ENCODE measurements at regions of chr1 and their contacts with region 1.

Region 1: GRCh38 chr1:209827384-209828262 is at the start of gene UTP25:
- DNase-seq: peak; percentile 87 to 98 (median 92)
- ATAC-seq: peak; percentile 89
- H3K4me3 ChIP-seq: peak within 1 kb of the TSS; percentile 73 to 98
- H3K4me3 Mint-ChIP-seq: peak within 1 kb of the TSS; percentile 94
- H3K27ac ChIP-seq: peak within 1 kb of the TSS; percentile 73 to 89
- H3K27ac Mint-ChIP-seq: peak within 1 kb of the TSS; percentile 89
- H3K4me1 ChIP-seq: peaks cover 20% of the 10 kb centered on the region
- H3K4me1 Mint-ChIP-seq: peaks cover 42% of the 10 kb centered on the region
- H3K27me3 ChIP-seq: peaks cover 0 to 2% of the 10 kb centered on the region in 2 experiments
- H3K27me3 Mint-ChIP-seq: peaks cover 4% of the 10 kb centered on the region
- CTCF ChIP-seq: peak; percentile 78
- total RNA-seq, gene UTP25: 7.5 to 7.9 TPM

Region 2: DNA sequence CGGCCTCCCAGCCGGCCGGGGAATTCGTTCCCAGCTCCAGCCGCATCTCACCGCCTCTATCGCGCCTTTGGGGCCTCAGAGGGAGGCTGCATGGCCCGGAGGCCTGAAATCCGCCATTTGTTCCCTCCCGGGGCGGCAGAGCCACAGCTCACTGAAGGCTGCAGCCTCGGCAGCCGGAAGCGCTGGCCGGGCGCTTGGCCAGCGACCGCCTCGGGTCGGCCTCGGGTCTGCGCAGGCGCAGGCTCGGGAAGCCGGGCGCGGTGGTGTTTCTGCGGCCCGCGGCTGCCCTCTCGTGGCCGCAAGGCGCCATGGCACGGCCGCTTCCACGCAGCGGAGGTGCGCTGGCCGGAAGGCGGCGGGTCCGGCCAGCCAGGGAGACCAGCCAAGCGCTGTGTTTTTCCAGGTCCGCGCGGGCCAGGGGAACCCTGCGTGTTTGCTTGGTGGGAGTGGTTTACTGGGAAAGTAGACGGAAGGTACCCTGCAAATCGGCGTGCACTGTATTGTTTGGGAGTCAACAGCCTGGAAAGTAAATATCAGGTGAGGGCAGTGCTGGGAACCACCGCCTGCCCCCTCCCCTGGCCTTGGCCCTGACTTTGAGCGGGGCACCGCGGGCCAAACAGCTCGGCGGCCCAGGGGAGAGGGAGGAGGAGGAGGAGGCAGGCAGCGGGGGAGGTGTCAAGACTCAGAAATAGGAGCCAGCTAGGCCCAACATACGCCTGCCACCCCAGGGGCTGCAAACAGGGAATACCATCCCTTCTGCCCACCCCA is 1864.0 kb before region 1 on chr1:
- CTCF ChIA-PET with region 1: no interaction called
- POLR2A ChIA-PET with region 1: no interaction called
- intact Hi-C with region 1: loop called in 1 of 2 experiments (anchors 5 kb)
- DNase-seq: peak; percentile 67 to 93 (median 82)
- ATAC-seq: peak; percentile 91
- H3K4me3 ChIP-seq: peak overlapping the region; percentile 71 to 92
- H3K4me3 Mint-ChIP-seq: peak overlapping the region; percentile 85
- H3K27ac ChIP-seq: peak overlapping the region; percentile 28 to 73
- H3K27ac Mint-ChIP-seq: peak overlapping the region; percentile 55
- H3K4me1 ChIP-seq: peaks cover 8% of the 10 kb centered on the region
- H3K4me1 Mint-ChIP-seq: peaks cover 12% of the 10 kb centered on the region
- H3K27me3 ChIP-seq: peaks cover 4 to 12% of the 10 kb centered on the region in 2 experiments
- H3K27me3 Mint-ChIP-seq: peaks cover 17% of the 10 kb centered on the region
- CTCF ChIP-seq: peak; percentile 99

Region 3: DNA sequence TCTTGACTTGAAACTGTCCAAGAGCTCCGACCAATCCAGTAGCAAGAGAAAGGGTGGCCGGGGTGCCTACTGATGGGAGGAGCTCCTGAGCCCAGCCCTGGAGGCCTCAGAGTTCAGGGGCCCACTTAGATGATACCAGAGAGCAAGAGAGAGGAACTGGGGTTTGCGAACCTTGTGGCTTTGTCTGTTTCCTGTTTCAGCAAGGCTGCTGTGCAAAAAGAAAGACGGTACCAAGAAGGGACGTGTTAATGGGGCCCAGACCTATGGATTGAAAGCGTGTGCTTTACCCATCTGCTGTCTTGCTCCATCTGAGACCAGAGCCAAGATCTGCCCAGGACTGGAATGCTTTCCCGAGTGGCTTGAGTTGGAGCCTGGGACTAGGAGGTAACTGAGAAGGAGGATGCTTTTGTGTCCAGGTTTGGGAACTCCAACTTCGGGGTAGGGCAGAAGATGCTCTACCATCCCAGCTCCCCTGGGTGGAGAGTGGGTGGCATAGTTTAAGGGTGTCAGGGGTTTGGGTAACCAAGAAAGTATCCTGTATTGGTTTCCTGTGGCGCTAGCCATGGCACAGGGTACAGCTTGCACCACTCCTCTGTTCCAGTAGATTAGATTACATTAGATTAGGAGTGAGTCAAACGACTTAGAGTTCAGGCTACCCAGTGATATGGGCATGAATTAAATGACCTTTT is 71.6 kb before region 1 on chr1 and contains the start of gene TRAF3IP3:
- CTCF ChIA-PET with region 1: interaction called, 14 read pairs
- POLR2A ChIA-PET with region 1: interaction called, 3 read pairs
- intact Hi-C with region 1: loop called in 1 of 2 experiments (anchors 5 kb)
- DNase-seq: peak; percentile 49 to 91 (median 79)
- ATAC-seq: peak; percentile 89
- H3K4me3 ChIP-seq: peak within 1 kb of the TSS; percentile 83 to 90
- H3K4me3 Mint-ChIP-seq: peak within 1 kb of the TSS; percentile 91
- H3K27ac ChIP-seq: peak within 1 kb of the TSS; percentile 79
- H3K27ac Mint-ChIP-seq: peak within 1 kb of the TSS; percentile 96
- H3K4me1 ChIP-seq: peaks cover 72% of the 10 kb centered on the region
- H3K4me1 Mint-ChIP-seq: peaks cover 81% of the 10 kb centered on the region
- H3K27me3 ChIP-seq: no peaks in the 10 kb centered on the region
- H3K27me3 Mint-ChIP-seq: no peaks in the 10 kb centered on the region
- CTCF ChIP-seq: no peak
- total RNA-seq, gene TRAF3IP3: 209 to 230 TPM

Region 4: GRCh38 chr1:209769171-209769904 is 58.3 kb before region 1 on chr1:
- CTCF ChIA-PET with region 1: interaction called, 10 read pairs
- POLR2A ChIA-PET with region 1: interaction called, 16 read pairs
- intact Hi-C with region 1: loop called in 1 of 2 experiments (anchors 5 kb)
- DNase-seq: peak; percentile 33 to 87 (median 76)
- ATAC-seq: peak; percentile 72
- H3K4me3 ChIP-seq: peak overlapping the region; percentile 72 to 88
- H3K4me3 Mint-ChIP-seq: no peak overlapping the region
- H3K27ac ChIP-seq: peak overlapping the region; percentile 75 to 76
- H3K27ac Mint-ChIP-seq: no peak overlapping the region
- H3K4me1 ChIP-seq: peaks cover 68% of the 10 kb centered on the region
- H3K4me1 Mint-ChIP-seq: peaks cover 44% of the 10 kb centered on the region
- H3K27me3 ChIP-seq: no peaks in the 10 kb centered on the region
- H3K27me3 Mint-ChIP-seq: no peaks in the 10 kb centered on the region
- CTCF ChIP-seq: no peak

Region 5: DNA sequence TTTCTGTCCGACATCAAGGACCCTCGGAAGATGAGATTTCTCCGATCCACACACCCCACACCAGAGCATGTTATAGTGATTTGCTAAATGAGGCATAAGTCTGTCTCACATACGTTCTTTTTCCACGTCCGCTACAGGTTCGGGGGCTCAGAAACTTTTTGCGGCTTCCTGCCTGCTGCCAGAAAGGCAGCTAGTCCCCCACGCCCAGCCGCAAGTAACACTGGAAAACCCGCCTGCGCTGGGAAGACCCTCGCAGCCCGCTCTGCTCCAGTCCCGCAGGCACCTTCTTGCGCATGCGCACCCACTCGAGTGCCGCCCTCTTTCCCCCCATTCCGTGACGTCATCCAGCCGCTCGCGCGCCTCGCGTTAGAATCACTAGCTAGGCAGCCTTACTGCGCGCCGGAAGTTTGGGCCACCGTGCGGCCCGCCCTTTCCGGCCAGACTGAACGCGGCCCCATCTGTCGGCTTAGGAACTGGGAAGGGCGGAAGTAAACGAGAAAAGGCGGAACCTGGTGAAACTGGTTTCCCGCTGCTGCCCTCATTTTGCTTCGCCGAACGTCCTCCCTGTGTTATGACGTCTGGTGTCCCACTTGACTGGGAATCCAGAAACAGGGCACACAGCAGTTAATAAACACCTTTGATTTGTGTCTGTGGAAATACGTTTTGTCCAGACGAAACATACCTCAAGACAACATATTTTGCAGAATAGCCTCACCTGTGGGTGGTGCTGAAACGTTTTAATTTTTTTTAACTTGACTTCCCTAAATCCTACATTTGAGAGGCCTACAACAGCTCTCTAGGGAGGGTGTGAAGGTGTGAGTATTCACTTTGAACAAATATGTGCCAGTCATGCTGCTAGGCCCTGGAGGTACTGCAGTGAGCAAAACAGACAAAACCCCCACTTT is 43.1 kb before region 1 on chr1 and contains the start of gene C1orf74:
- CTCF ChIA-PET with region 1: interaction called, 13 read pairs
- POLR2A ChIA-PET with region 1: no interaction called
- intact Hi-C with region 1: loop called (anchors 1 kb)
- DNase-seq: peak; percentile 98 to 100 (median 99)
- ATAC-seq: peak; percentile 95
- H3K4me3 ChIP-seq: peak within 1 kb of the TSS; percentile 64 to 70
- H3K4me3 Mint-ChIP-seq: peak within 1 kb of the TSS; percentile 92
- H3K27ac ChIP-seq: peak within 1 kb of the TSS; percentile 85 to 95
- H3K27ac Mint-ChIP-seq: peak within 1 kb of the TSS; percentile 98
- H3K4me1 ChIP-seq: peaks cover 17% of the 10 kb centered on the region
- H3K4me1 Mint-ChIP-seq: peaks cover 32% of the 10 kb centered on the region
- H3K27me3 ChIP-seq: no peaks in the 10 kb centered on the region
- H3K27me3 Mint-ChIP-seq: no peaks in the 10 kb centered on the region
- CTCF ChIP-seq: no peak
- total RNA-seq, gene C1orf74: 0.71 to 0.75 TPM

Region 6: GRCh38 chr1:209805875-209806760 is 21.5 kb before region 1 on chr1 and contains the start of gene IRF6:
- CTCF ChIA-PET with region 1: interaction called, 35 read pairs
- POLR2A ChIA-PET with region 1: interaction called, 4 read pairs
- intact Hi-C with region 1: loop called (anchors 1 to 2 kb)
- DNase-seq: peak; percentile 44 to 84 (median 72)
- ATAC-seq: peak; percentile 96
- H3K4me3 ChIP-seq: peak within 1 kb of the TSS; percentile 44 to 71
- H3K4me3 Mint-ChIP-seq: peak within 1 kb of the TSS; percentile 93
- H3K27ac ChIP-seq: peak within 1 kb of the TSS in 1 of 2 experiments; percentile 16
- H3K27ac Mint-ChIP-seq: peak within 1 kb of the TSS; percentile 86
- H3K4me1 ChIP-seq: peaks cover 12% of the 10 kb centered on the region
- H3K4me1 Mint-ChIP-seq: peaks cover 13% of the 10 kb centered on the region
- H3K27me3 ChIP-seq: no peaks in the 10 kb centered on the region
- H3K27me3 Mint-ChIP-seq: peaks cover 4% of the 10 kb centered on the region
- CTCF ChIP-seq: no peak
- total RNA-seq, gene IRF6: 2.5 to 3.4 TPM

Region 7: GRCh38 chr1:209937996-209938959 is 110.7 kb after region 1 on chr1 and contains the start of gene SYT14:
- CTCF ChIA-PET with region 1: no interaction called
- POLR2A ChIA-PET with region 1: no interaction called
- intact Hi-C with region 1: no loop called
- DNase-seq: peak in 1 of 9 experiments; percentile 17
- ATAC-seq: no peak
- H3K4me3 ChIP-seq: no peak within 1 kb of the TSS
- H3K4me3 Mint-ChIP-seq: peak within 1 kb of the TSS; percentile 69
- H3K27ac ChIP-seq: no peak within 1 kb of the TSS
- H3K27ac Mint-ChIP-seq: no peak within 1 kb of the TSS
- H3K4me1 ChIP-seq: no peaks in the 10 kb centered on the region
- H3K4me1 Mint-ChIP-seq: peaks cover 13% of the 10 kb centered on the region
- H3K27me3 ChIP-seq: peaks cover 0 to 5% of the 10 kb centered on the region in 2 experiments
- H3K27me3 Mint-ChIP-seq: peaks cover 63% of the 10 kb centered on the region
- CTCF ChIP-seq: no peak
- total RNA-seq, gene SYT14: not detected

Region 8: GRCh38 chr1:211258756-211259637 is 1431.4 kb after region 1 on chr1 and contains the start of gene RCOR3:
- CTCF ChIA-PET with region 1: no interaction called
- POLR2A ChIA-PET with region 1: no interaction called
- intact Hi-C with region 1: loop called in 1 of 2 experiments (anchors 5 kb)
- DNase-seq: peak; percentile 81 to 96 (median 91)
- ATAC-seq: peak; percentile 76
- H3K4me3 ChIP-seq: peak within 1 kb of the TSS; percentile 74 to 88
- H3K4me3 Mint-ChIP-seq: peak within 1 kb of the TSS; percentile 95
- H3K27ac ChIP-seq: peak within 1 kb of the TSS; percentile 80 to 84
- H3K27ac Mint-ChIP-seq: peak within 1 kb of the TSS; percentile 94
- H3K4me1 ChIP-seq: peaks cover 16% of the 10 kb centered on the region
- H3K4me1 Mint-ChIP-seq: peaks cover 18% of the 10 kb centered on the region
- H3K27me3 ChIP-seq: no peaks in the 10 kb centered on the region
- H3K27me3 Mint-ChIP-seq: no peaks in the 10 kb centered on the region
- CTCF ChIP-seq: peak; percentile 40
- total RNA-seq, gene RCOR3: 54.6 to 61.1 TPM